PC-9 (cell line): ENCODE measurements at regions of chr1 and their contacts with region 1.

Region 1: DNA sequence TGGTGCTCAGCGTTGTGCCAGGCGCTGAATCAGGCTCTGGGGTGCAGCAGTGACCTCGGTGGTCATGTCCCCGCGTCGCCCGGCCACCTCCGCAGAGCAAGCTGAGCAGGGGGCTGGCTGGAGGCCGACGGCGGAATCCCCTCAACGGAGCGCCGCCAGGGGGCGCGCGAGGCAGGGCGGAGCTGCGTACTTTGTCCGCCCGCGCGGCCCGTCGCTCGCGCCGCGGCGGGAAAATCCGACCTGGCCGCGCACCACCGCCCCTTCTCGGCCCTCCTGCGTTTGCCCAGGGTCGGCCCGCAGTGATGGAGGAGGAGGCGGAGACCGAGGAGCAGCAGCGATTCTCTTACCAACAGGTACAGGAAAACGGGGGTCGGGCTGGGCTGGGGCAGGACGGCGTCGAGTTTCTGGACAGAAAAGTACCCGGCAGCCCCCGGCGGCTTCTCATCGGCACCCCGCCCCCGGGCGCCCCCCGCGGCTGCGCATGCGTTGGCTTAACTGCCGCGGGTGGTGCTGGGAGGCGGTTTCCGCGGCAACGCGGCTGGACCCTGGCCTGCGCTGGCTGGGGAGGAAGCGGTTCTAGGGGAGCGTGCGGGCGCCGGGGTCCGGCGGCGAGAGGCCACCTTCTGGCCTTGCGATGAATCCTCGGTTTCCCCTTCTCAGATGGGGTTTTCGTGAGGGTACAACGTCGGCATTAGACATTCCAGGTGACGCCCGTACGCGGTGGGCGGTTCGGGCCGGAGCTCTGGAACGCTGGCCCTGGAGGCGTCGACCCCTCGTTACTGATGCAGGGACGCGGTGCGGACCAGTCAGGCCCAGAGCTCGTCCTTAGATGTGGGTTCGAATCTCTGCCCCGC is at the start of gene CENPS:
- DNase-seq: peak; percentile 65 to 90
- H3K4me3 ChIP-seq: peak within 1 kb of the TSS; percentile 71
- H3K27ac ChIP-seq: peak within 1 kb of the TSS; percentile 26; the same call in 1 of the 2 replicates
- H3K4me1 ChIP-seq: peaks cover 10% of the 10 kb centered on the region
- H3K27me3 ChIP-seq: no peaks in the 10 kb centered on the region
- CTCF ChIP-seq: peak; percentile 82
- total RNA-seq, gene CENPS: 28.5 and 35.9 TPM in 2 replicates

Region 2: GRCh38 chr1:9823943-9824701 is 606.3 kb before region 1 on chr1 and contains the start of gene CLSTN1:
- CTCF ChIA-PET with region 1: no interaction called
- POLR2A ChIA-PET with region 1: no interaction called
- intact Hi-C with region 1: loop called (anchors 1 kb)
- DNase-seq: peak; percentile 43 to 83
- H3K4me3 ChIP-seq: peak within 1 kb of the TSS; percentile 95
- H3K27ac ChIP-seq: peak within 1 kb of the TSS; percentile 61
- H3K4me1 ChIP-seq: peaks cover 36% of the 10 kb centered on the region
- H3K27me3 ChIP-seq: no peaks in the 10 kb centered on the region
- CTCF ChIP-seq: no peak
- total RNA-seq, gene CLSTN1: 138 and 140 TPM in 2 replicates

Region 3: GRCh38 chr1:9942939-9943788 is 487.3 kb before region 1 on chr1 and contains the starts of genes LZIC and NMNAT1:
- CTCF ChIA-PET with region 1: no interaction called
- POLR2A ChIA-PET with region 1: no interaction called
- intact Hi-C with region 1: loop called (anchors 5 kb)
- DNase-seq: peak; percentile 78 to 91
- H3K4me3 ChIP-seq: peak within 1 kb of the TSS; percentile 86
- H3K27ac ChIP-seq: peak within 1 kb of the TSS; percentile 88
- H3K4me1 ChIP-seq: peaks cover 6% of the 10 kb centered on the region
- H3K27me3 ChIP-seq: no peaks in the 10 kb centered on the region
- CTCF ChIP-seq: no peak
- total RNA-seq, gene LZIC: 27.4 and 33.5 TPM in 2 replicates
- total RNA-seq, gene NMNAT1: 10.1 and 13.4 TPM in 2 replicates

Region 4: GRCh38 chr1:10378081-10378841 is 52.2 kb before region 1 on chr1:
- CTCF ChIA-PET with region 1: interaction called, 3 read pairs
- POLR2A ChIA-PET with region 1: no interaction called
- intact Hi-C with region 1: loop called (anchors 1 kb)
- DNase-seq: peak; percentile 86 to 96
- H3K4me3 ChIP-seq: peak overlapping the region; percentile 42; the same call in 1 of the 2 replicates
- H3K27ac ChIP-seq: peak overlapping the region; percentile 95
- H3K4me1 ChIP-seq: peaks cover 39% of the 10 kb centered on the region
- H3K27me3 ChIP-seq: no peaks in the 10 kb centered on the region
- CTCF ChIP-seq: no peak

Region 5: GRCh38 chr1:10494754-10495474 is 64.5 kb after region 1 on chr1:
- CTCF ChIA-PET with region 1: interaction called, 19 read pairs
- POLR2A ChIA-PET with region 1: interaction called, 3 read pairs
- intact Hi-C with region 1: loop called (anchors 1 kb)
- DNase-seq: peak; percentile 45 to 76
- H3K4me3 ChIP-seq: no peak overlapping the region
- H3K27ac ChIP-seq: no peak overlapping the region
- H3K4me1 ChIP-seq: no peaks in the 10 kb centered on the region
- H3K27me3 ChIP-seq: no peaks in the 10 kb centered on the region
- CTCF ChIP-seq: peak; percentile 87